ENCODE measurements at regions of chr2 and their contacts with region 1.

Region 1: GRCh38 chr2:105037572-105038382 is at the start of gene MRPS9:
- DNase-seq: peak; percentile 94 to 97 (median 95)
- ATAC-seq: peak; percentile 99
- H3K4me3 ChIP-seq: peak within 1 kb of the TSS; percentile 65
- H3K4me3 Mint-ChIP-seq: peak within 1 kb of the TSS; percentile 89 to 100 (median 99)
- H3K27ac ChIP-seq: peak within 1 kb of the TSS; percentile 85
- H3K27ac Mint-ChIP-seq: peak within 1 kb of the TSS; percentile 84 to 98 (median 94)
- H3K4me1 ChIP-seq: peaks cover 4 to 12% of the 10 kb centered on the region in 2 donors
- H3K4me1 Mint-ChIP-seq: peaks cover 23 to 66% (median 42%) of the 10 kb centered on the region in 7 donors
- H3K27me3 ChIP-seq: no peaks in the 10 kb centered on the region
- H3K27me3 Mint-ChIP-seq: no peaks in the 10 kb centered on the region
- total RNA-seq, gene MRPS9: 12.5 to 23.6 (median 21.3) TPM

Region 2: DNA sequence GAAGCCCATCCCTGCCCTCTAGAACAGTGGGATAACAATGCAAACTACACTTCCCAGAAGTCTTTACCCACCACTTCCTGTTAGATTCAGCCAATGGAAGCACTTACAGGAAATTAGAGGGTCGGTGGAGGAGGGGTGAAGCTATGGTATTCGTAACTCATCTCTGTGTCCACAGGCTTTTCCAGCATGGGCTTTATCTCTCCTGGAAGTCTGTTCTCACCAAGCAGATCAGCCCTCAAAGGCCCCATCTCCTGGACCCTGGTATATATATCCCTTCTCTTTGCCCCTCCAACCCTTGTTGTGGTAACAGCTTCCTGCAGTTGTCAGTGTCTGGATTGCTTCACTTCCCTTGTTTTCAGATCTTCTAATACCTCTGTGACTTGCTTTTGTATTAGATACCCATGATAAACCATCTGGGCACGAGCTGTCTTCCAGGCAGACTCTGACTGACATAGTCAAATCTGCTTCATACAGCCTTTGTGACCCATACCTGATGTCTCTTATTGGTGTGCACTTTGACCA is 658.9 kb before region 1 on chr2:
- CTCF ChIA-PET with region 1: no interaction called
- POLR2A ChIA-PET with region 1: no interaction called
- intact Hi-C with region 1: loop called in 1 of 2 experiments (anchors 2 kb)
- DNase-seq: peak in 7 of 9 donors; percentile 14 to 68 (median 63)
- ATAC-seq: peak; percentile 80
- H3K4me3 ChIP-seq: peak overlapping the region; percentile 66
- H3K4me3 Mint-ChIP-seq: peak overlapping the region; percentile 78 to 97 (median 92)
- H3K27ac ChIP-seq: peak overlapping the region; percentile 64
- H3K27ac Mint-ChIP-seq: peak overlapping the region; percentile 80 to 97 (median 95)
- H3K4me1 ChIP-seq: peaks cover 0 to 6% of the 10 kb centered on the region in 2 donors
- H3K4me1 Mint-ChIP-seq: peaks cover 8 to 22% (median 20%) of the 10 kb centered on the region in 7 donors
- H3K27me3 ChIP-seq: no peaks in the 10 kb centered on the region
- H3K27me3 Mint-ChIP-seq: no peaks in the 10 kb centered on the region

Region 3: DNA sequence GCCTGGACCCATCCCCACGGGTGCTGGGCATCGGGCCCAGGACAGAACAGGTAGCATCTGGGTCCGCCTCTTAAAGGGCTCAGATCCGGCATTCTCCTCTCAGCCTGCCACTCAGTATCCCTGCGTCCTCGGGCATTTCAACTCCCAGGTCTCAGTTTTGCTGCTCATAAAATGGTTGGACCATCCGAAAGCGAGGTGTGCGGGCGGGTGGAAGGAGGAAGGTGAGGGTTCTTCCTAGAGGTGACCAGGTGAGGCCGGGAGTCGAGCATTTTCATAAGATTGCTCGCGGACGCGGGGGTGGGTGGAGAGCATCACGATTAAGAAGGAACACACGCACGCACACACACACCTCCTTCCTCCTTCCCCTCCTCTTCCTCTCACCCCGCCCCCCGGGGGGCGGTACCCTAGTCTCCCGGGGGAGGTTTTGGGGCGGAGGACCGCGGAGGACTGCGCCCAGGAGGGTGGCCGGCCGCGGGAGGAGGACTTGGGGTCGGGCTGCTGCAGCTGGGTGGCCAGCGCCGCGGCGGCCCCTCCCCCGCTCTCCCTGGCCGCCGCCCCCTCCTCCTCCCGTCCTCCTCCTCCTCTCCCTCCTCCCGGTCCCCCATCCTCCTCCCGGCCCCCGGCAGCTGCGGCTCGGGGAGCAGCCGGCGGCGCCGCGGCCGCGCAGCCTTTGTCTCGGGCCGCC is 105.8 kb after region 1 on chr2:
- CTCF ChIA-PET with region 1: no interaction called
- POLR2A ChIA-PET with region 1: no interaction called
- intact Hi-C with region 1: loop called in 1 of 2 experiments (anchors 5 kb)
- DNase-seq: peak in 2 of 9 donors; percentile 6 to 50
- ATAC-seq: peak; percentile 41
- H3K4me3 ChIP-seq: peak overlapping the region; percentile 39
- H3K4me3 Mint-ChIP-seq: peak overlapping the region; percentile 49 to 85 (median 74)
- H3K27ac ChIP-seq: no peak overlapping the region
- H3K27ac Mint-ChIP-seq: no peak overlapping the region
- H3K4me1 ChIP-seq: no peaks in the 10 kb centered on the region
- H3K4me1 Mint-ChIP-seq: peaks cover 0 to 11% (median 10%) of the 10 kb centered on the region in 7 donors
- H3K27me3 ChIP-seq: peaks cover 0 to 5% of the 10 kb centered on the region in 2 donors
- H3K27me3 Mint-ChIP-seq: peaks cover 32 to 63% (median 61%) of the 10 kb centered on the region in 5 donors